ENCODE measurements at regions of chr3 and their contacts with region 1.

Region 1: GRCh38 chr3:39126532-39127071 is 19.1 kb downstream of the TTC21A start:
- DNase-seq: no peak
- ATAC-seq: peak; percentile 67
- H3K4me3 ChIP-seq: no peak overlapping the region
- H3K27ac ChIP-seq: no peak overlapping the region
- H3K4me1 ChIP-seq: peaks cover 25% of the 10 kb centered on the region
- H3K27me3 ChIP-seq: no peaks in the 10 kb centered on the region
- CTCF ChIP-seq: peak; percentile 37 to 46 (median 44); a peak in 5 of 6 replicates
- EP300 ChIP-seq: no peak
- POLR2A ChIP-seq: no peak
- RAD21 ChIP-seq: peak; percentile 73

Region 2: DNA sequence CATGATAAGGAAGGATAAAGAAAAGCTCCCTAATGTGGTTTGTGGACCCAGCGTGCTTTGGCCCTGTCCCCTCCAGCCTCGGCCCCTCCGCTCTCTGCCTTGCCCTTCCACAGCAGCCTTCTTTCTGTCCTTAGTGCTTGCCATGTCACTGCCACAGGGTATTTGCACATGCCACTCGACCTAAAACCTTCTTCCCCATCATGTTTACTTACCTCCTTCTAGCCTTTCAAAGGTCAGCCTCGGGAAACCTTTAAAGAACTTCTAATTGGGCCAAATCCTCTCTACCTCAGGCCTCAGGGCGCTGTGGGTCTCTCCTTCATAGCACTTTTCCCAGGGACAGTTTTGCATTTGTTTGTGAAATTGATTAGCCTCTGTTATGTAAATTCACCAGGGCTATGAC is 147.9 kb before region 1 on chr3:
- CTCF ChIA-PET with region 1: no interaction called
- POLR2A ChIA-PET with region 1: no interaction called
- RAD21 ChIA-PET with region 1: no interaction called
- SMC1A ChIA-PET with region 1: no interaction called
- in situ Hi-C with region 1: no loop called
- intact Hi-C with region 1: no loop called
- DNase-seq: no peak
- ATAC-seq: no peak
- H3K4me3 ChIP-seq: no peak overlapping the region
- H3K27ac ChIP-seq: no peak overlapping the region
- H3K4me1 ChIP-seq: no peaks in the 10 kb centered on the region
- H3K27me3 ChIP-seq: no peaks in the 10 kb centered on the region
- CTCF ChIP-seq: no peak
- EP300 ChIP-seq: no peak
- POLR2A ChIP-seq: no peak
- RAD21 ChIP-seq: no peak

Region 3: DNA sequence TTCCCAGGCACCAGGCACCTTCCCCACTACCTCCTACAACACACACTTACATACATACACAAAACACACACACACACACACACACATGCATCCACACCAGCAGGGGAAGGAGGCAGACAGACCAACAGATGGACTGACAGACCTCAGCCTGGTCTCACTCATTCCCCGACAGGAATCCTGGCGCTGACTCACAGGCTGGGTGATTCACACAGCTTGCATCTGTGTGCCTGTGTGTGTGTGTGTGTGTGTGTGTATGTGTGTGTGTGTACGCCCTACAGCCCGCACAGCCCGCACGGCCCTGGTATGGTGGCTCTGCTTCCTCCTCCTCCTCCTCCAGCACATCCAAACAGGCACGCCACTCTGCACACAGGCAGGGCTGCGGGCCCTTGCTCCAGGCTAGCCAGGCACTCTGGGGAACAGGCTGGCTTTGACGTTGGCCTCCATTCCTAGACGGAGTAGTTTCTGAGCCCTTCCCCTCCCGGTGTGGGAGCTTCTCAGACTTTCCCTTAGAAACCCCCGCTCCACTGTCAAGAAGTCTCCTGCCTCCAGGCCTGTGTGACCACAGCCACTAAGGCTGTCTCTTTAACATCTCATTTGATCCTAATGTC is 20.5 kb after region 1 on chr3:
- CTCF ChIA-PET with region 1: interaction called, 10 read pairs
- POLR2A ChIA-PET with region 1: interaction called, 4 read pairs
- RAD21 ChIA-PET with region 1: interaction called, 6 read pairs
- SMC1A ChIA-PET with region 1: interaction called, 20 read pairs
- in situ Hi-C with region 1: no loop called
- intact Hi-C with region 1: no loop called
- DNase-seq: no peak
- ATAC-seq: peak; percentile 38
- H3K4me3 ChIP-seq: peak overlapping the region; percentile 85
- H3K27ac ChIP-seq: peak overlapping the region; percentile 99
- H3K4me1 ChIP-seq: peaks cover 45% of the 10 kb centered on the region
- H3K27me3 ChIP-seq: no peaks in the 10 kb centered on the region
- CTCF ChIP-seq: no peak
- EP300 ChIP-seq: no peak
- POLR2A ChIP-seq: peak; percentile 57
- RAD21 ChIP-seq: no peak

Measured in GM12878 (cell line).